ENCODE measurements at regions of chr10 and their contacts with region 1.

Region 1: GRCh38 chr10:29998142-29998808 is 61.1 kb downstream of the JCAD start:
- DNase-seq: peak; percentile 75
- ATAC-seq: peak; percentile 83
- H3K4me3 ChIP-seq: no peak overlapping the region
- H3K27ac ChIP-seq: no peak overlapping the region
- H3K4me1 ChIP-seq: peaks cover 0 to 7% of the 10 kb centered on the region in 2 experiments; a peak in 2 of 4 replicates
- H3K27me3 ChIP-seq: no peaks in the 10 kb centered on the region
- CTCF ChIP-seq: peak; percentile 99 to 100 (median 100)
- POLR2A ChIP-seq: no peak
- RAD21 ChIP-seq: peak; percentile 97

Region 2: GRCh38 chr10:28797904-28798371 is 1200.3 kb before region 1 on chr10:
- CTCF ChIA-PET with region 1: no interaction called
- POLR2A ChIA-PET with region 1: no interaction called
- RAD21 ChIA-PET with region 1: no interaction called
- intact Hi-C with region 1: no loop called
- DNase-seq: no peak
- ATAC-seq: no peak
- H3K4me3 ChIP-seq: no peak overlapping the region
- H3K27ac ChIP-seq: no peak overlapping the region
- H3K4me1 ChIP-seq: peaks cover 0 to 4% of the 10 kb centered on the region in 2 experiments; a peak in 2 of 4 replicates
- H3K27me3 ChIP-seq: 0 out of 2 replicates have a peak, but pooled peaks cover 4% of the 10 kb centered on the region
- CTCF ChIP-seq: no peak
- POLR2A ChIP-seq: no peak
- RAD21 ChIP-seq: 0 out of 2 replicates have a peak, but pooled peaks have one; percentile 3

Region 3: DNA sequence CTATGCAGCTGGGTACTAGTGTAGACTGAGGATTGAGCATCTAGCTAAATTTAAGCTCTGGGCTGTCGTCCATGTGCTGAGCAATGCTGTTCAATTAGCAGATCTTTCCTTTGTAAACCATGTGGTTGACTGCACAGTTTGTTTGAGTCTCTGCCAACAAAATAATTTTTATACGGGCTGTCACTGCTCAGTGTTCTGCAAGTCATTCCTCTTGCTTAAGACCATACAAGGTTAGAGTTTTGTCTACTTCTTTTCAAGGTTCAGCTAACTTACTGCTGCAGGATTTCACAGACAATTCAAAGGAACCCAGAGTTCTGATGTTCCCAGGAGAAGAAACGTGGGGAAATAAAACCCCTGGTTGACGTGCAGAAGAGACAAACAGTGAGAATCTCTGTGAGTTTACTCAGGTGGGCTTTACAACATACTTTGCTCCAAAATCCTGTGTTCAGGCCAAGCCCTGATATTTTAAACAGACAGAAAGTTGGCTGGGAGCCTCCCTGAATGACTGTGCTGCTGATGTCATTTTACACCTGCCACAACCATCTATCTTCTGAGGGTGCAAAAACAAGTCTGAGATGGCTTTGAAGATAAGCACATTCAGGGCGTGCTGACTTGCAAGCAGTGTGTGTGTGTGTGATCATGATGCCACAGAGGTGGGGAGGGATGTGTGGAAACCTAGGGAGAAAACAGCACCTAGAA is 186.4 kb before region 1 on chr10:
- CTCF ChIA-PET with region 1: no interaction called
- POLR2A ChIA-PET with region 1: no interaction called
- RAD21 ChIA-PET with region 1: no interaction called
- intact Hi-C with region 1: no loop called
- DNase-seq: no peak
- ATAC-seq: no peak
- H3K4me3 ChIP-seq: no peak overlapping the region
- H3K27ac ChIP-seq: no peak overlapping the region
- H3K4me1 ChIP-seq: peaks cover 0 to 9% of the 10 kb centered on the region in 2 experiments; a peak in 2 of 4 replicates
- H3K27me3 ChIP-seq: no peaks in the 10 kb centered on the region
- CTCF ChIP-seq: no peak
- POLR2A ChIP-seq: no peak
- RAD21 ChIP-seq: no peak

Region 4: GRCh38 chr10:30011396-30011795 is 13.1 kb after region 1 on chr10:
- CTCF ChIA-PET with region 1: interaction called, 16 read pairs
- POLR2A ChIA-PET with region 1: no interaction called
- RAD21 ChIA-PET with region 1: no interaction called
- intact Hi-C with region 1: no loop called
- DNase-seq: no peak
- ATAC-seq: no peak
- H3K4me3 ChIP-seq: no peak overlapping the region
- H3K27ac ChIP-seq: no peak overlapping the region
- H3K4me1 ChIP-seq: no peaks in the 10 kb centered on the region
- H3K27me3 ChIP-seq: no peaks in the 10 kb centered on the region
- CTCF ChIP-seq: no peak
- POLR2A ChIP-seq: no peak
- RAD21 ChIP-seq: no peak

Region 5: DNA sequence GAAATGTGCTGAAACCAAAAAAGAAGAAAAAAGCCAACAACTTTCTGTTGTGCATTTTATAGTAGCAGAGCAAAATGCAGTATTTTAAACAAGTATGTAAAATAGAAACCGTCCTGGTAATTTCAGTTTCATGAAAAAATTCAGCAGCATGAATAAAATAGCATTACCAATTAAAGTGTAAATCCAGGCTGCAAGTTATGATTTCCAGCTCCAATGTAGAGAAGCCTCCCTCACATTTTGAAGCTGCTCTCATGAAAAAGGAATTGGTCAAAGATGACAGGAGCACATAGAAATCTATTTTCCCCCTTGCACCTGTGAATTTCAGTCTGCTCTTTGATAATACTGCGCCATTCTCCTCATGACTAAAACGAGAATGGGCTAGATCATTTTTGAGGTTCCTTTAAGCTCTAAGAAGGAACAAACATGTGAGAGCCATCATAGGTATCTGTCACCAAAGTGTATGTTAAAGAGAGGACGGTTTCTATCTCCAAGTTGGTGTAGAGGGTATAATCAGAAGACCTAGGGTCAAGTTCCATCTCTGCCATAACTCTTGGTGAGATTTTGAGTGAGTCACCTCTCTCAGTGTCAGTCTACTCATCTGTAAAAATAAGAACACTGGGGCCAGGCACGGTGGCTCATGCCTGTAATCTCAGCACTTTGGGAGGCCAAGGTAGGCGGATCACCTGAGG is 243.3 kb after region 1 on chr10:
- CTCF ChIA-PET with region 1: interaction called, 8 read pairs
- POLR2A ChIA-PET with region 1: no interaction called
- RAD21 ChIA-PET with region 1: interaction called, 3 read pairs
- intact Hi-C with region 1: loop called (anchors 2 kb)
- DNase-seq: no peak
- ATAC-seq: no peak
- H3K4me3 ChIP-seq: no peak overlapping the region
- H3K27ac ChIP-seq: no peak overlapping the region
- H3K4me1 ChIP-seq: no peaks in the 10 kb centered on the region
- H3K27me3 ChIP-seq: no peaks in the 10 kb centered on the region
- CTCF ChIP-seq: no peak
- POLR2A ChIP-seq: no peak
- RAD21 ChIP-seq: no peak

Region 6: DNA sequence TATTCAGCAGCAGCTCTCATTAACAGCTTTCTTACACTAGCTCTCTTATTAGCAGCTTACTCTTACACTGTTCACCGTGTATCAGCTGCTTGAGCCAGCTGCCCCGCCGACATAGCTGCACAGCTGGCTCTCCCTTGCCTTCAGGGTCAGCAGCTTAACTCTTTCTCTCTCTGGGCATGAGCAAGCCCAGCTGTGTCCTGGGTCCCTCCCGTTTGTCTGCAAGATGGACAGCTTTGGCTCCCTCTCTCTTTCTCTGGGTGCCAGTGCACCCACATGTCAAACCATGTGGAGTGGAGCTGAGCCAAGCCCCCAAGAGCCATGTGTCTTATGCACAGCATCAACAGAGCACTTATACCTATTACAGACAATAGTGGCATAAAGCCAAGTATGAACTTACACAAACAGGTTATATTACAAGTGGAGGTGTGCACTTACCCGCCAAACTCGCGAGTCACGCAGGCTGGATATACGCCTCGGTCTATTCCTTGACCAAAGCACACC is 386.5 kb after region 1 on chr10:
- CTCF ChIA-PET with region 1: interaction called, 7 read pairs
- POLR2A ChIA-PET with region 1: no interaction called
- RAD21 ChIA-PET with region 1: no interaction called
- intact Hi-C with region 1: loop called (anchors 2 kb)
- DNase-seq: peak; percentile 48
- ATAC-seq: peak; percentile 72
- H3K4me3 ChIP-seq: no peak overlapping the region
- H3K27ac ChIP-seq: no peak overlapping the region
- H3K4me1 ChIP-seq: peaks cover 17 to 31% of the 10 kb centered on the region in 2 experiments
- H3K27me3 ChIP-seq: no peaks in the 10 kb centered on the region
- CTCF ChIP-seq: peak; percentile 56 to 78 (median 68); a peak in 5 of 6 replicates
- POLR2A ChIP-seq: no peak
- RAD21 ChIP-seq: peak; percentile 62

Measured in HCT116 (cell line).